Posterior vena cava (tissue), 2 donors: ENCODE measurements at regions of chrX and their contacts with region 1.

Region 1: DNA sequence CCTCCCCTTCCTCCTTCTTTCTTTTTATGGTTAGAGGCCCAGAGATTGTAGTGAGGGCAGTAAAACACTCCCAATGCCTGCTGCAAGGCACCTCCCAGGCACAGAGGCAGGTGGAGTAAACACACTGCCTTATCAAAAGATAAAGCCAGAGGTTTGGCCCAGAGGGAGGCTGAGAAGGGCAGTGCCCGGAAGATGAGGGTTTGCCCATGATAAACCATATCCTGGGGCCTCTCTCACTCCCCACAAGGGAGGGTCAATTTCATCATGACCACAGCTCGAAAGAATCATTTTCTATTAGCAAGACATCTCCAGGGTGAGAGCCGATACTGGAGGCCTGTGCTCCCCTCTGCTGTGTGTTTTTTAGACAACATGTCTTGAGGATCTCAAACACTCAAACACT is 98.5 kb upstream of the FAM9C start:
- DNase-seq: no peak

Region 2: GRCh38 chrX:12013220-12013619 is 1129.7 kb before region 1 on chrX:
- intact Hi-C with region 1: loop called in 1 of 2 experiments (anchors 5 kb)
- DNase-seq: no peak

Region 3: GRCh38 chrX:12115377-12115776 is 1027.5 kb before region 1 on chrX:
- intact Hi-C with region 1: no loop called
- DNase-seq: no peak

Region 4: GRCh38 chrX:13194291-13195103 is 51.6 kb after region 1 on chrX:
- intact Hi-C with region 1: no loop called
- DNase-seq: no peak